Activated CD4-positive, alpha-beta T cell treated with anti-CD3 and anti-CD28 coated beads, Interleukin-2, amount 10 ng/mL, durations not matched to agents 24 days and 14 days (primary cell): ENCODE measurements at regions of chr5 and their contacts with region 1.

Region 1: DNA sequence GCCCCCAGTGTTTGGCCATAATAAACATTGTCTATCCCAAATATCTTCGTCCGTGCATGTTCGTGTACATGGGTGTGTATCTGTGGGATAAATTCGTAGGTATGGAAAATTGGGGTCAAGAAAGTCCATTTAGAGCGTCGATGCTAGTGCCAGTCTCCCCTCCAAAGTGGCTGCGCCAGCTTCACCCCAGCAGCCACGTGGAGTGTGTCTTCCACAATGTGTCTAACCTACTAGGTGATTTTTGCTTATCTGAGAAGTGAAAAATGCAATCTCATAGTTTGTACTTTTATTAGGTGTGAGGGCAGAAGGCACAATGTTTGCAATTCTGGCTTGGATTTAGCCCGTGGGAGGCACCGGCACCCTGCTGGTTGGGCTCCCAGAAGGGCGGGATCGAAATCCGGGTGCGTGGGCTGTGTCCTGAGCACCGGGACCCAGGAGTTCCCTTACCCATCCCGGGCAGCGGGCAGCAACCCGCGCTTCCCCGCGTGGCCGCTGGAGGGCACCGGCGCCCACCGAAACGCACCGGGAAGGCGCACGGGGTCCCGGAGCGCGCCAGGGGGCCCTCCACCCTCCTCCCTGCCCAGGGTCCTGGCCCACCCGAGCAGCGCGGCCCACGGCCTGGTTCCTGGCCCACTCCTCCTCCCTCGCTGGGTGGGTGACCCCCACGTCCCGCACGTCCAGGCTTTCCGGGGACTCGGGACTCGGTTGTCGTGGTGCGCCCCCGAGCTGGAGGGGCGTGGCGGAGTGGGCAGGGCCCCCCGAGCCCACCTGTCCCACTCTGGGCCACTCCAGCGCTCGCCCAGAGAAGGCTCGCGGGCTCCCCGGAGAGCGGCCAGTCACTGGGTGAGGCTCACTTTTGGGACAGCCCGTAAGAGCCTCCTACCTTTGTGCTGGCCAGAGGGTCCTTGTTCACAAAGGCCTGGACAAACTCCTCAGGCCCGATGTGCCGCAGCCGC is 55.4 kb upstream of the RNF130 start:
- DNase-seq: peak; percentile 81
- H3K4me3 Mint-ChIP-seq: no peak overlapping the region
- H3K27ac Mint-ChIP-seq: no peak overlapping the region
- H3K4me1 Mint-ChIP-seq: peaks cover 4% of the 10 kb centered on the region
- H3K27me3 Mint-ChIP-seq: peaks cover 5% of the 10 kb centered on the region

Region 2: DNA sequence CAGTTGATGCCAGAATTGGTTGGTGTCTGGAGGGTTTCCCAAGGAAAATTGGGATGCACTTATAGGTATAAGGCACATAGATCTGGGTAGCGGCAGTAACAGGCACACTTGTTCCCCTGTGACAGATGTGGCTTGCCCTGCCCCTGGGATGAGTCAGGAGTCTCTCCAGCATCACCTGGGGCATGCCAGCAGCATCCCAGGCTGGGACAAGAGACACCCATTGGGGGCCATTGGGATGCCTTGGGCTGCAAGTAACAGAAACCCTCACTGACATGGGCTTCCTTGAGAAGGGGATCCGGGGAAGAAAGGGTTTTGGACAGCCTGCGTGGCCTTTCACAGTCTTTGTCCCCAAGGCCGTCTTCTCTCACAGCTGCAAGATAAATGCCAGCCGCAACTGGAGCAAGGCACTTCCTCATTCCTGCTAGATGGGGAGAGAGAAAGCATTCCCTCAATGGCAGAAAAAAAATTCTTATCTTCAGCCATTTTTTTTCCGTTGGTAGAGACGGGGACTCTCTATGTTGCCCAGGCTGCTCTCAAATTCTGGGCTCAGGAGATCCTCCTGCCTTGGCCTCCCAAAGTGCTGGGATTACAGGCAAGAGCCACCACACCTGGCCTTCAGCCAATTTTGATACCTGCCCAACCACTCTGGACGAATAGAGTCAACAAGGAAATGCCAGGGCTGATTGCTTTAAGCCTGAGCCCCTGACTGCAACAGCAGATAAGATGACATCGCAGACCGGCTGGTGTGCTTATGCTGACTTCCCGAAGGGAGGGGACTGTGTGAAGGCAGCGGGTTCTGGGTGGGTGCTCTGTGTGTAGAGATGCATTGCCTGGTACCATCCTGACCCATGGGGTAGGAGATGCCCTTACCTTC is 42.1 kb before region 1 on chr5:
- intact Hi-C with region 1: no loop called
- DNase-seq: no peak
- H3K4me3 Mint-ChIP-seq: no peak overlapping the region
- H3K27ac Mint-ChIP-seq: no peak overlapping the region
- H3K4me1 Mint-ChIP-seq: peaks cover 11% of the 10 kb centered on the region
- H3K27me3 Mint-ChIP-seq: peaks cover 13% of the 10 kb centered on the region

Region 3: DNA sequence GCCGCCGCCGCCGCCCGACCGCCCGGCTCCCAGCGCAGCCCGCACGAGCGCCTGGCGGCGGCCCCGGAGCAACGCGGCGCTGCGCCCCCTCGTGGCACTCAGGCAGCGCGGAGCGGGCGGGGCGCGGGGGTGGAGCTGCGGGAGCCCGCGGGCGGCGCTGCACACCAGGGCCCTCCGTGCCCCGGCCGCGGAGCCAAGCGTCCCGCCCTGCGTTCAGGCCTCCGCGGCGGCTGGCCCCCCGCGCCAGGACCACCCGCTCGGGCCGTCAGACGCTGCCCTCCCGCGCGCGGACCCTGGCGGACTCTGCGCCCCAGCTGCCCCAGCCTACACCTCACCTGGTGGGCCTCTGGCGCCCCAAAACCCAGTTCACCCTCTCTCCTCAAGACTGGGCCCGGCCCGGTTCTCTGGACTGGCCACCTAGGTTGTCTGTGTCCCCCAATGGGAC is 82.2 kb after region 1 on chr5 and contains the start of gene RASGEF1C:
- intact Hi-C with region 1: loop called (anchors 1 kb)
- DNase-seq: peak; percentile 92
- H3K4me3 Mint-ChIP-seq: peak within 1 kb of the TSS; percentile 44
- H3K27ac Mint-ChIP-seq: no peak within 1 kb of the TSS
- H3K4me1 Mint-ChIP-seq: peaks cover 4% of the 10 kb centered on the region
- H3K27me3 Mint-ChIP-seq: peaks cover 21% of the 10 kb centered on the region
- total RNA-seq, gene RASGEF1C: not detected in 2 replicates

Region 4: DNA sequence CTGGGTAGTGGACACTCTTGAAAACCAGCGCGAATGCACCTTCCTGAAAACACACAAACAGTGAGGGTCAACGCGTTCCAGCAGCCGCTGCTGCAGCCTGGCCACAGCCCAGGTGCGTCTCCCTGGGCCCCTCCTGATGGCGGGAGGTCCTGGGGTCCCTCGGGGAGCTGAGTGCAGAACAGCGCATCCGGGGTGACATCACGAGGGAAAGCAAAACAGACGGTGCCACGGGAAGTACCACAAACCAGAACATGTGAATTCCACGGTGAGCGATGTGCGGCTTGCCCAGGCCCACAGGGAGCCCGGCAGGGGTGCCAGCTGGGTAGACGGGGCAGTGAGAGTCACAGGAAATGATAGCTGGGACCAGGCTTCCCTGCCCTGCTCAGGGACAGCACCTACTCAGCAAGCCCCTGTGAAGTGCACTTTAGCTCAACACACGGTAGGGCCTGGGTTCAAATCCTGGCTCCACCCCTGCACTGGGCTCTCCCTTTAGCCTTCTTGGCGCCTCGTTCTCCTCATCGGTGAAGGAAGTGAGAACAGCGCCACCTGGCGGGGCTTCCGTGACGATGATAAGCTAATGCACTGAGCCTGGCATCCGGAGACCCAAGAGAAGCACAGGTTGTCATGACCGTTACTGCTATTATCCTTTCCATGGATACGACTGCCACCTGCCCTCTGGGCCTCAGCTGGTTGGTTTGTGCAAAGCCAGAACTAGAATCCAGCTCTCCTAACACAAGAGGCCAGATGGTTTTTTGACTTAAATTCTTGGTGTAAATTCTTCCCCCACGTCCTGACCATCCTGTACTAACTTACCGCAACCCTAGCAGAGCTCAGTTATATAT is 201.5 kb after region 1 on chr5:
- intact Hi-C with region 1: loop called (anchors 1 kb)
- DNase-seq: peak; percentile 93
- H3K4me3 Mint-ChIP-seq: no peak overlapping the region
- H3K27ac Mint-ChIP-seq: no peak overlapping the region
- H3K4me1 Mint-ChIP-seq: no peaks in the 10 kb centered on the region
- H3K27me3 Mint-ChIP-seq: peaks cover 12% of the 10 kb centered on the region